ENCODE measurements at regions of chr9 and their contacts with region 1.

Region 1: DNA sequence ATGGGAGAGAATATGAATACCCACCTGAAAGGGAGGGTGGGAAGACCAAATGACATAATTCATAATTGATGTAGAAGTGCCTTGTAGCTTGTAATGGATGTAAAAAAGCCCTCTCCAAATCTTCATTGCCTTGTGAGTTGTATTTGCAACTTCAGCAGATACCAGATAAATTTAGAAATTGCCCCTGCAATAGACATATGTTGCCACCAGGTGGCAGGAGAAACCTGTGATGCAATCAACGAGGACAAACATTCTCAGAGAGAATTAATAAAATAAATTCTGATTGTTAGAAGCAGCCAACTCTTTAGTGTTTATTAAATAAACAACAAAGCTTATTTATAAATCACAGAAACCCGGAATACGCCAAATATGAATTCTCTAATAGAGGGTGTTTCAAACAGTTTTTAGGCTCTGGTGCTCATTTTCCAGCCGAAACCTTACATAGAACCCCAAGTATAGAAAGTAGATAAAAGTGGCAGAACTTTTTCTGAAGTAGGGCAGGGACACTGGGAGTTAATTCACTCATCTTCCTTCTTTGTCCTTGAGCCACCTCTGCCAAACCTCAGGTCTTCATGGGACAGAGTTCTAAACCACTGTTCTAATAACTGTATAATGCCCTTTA is 147.8 kb downstream of the TMEM38B start:
- DNase-seq: no peak
- H3K4me3 ChIP-seq: no peak overlapping the region
- H3K27ac ChIP-seq: no peak overlapping the region
- H3K4me1 ChIP-seq: no peaks in the 10 kb centered on the region
- H3K27me3 ChIP-seq: no peaks in the 10 kb centered on the region
- CTCF ChIP-seq: peak in 3 of 4 experiments; percentile 63 to 71 (median 63)
- EP300 ChIP-seq: no peak
- POLR2A ChIP-seq: no peak

Region 2: DNA sequence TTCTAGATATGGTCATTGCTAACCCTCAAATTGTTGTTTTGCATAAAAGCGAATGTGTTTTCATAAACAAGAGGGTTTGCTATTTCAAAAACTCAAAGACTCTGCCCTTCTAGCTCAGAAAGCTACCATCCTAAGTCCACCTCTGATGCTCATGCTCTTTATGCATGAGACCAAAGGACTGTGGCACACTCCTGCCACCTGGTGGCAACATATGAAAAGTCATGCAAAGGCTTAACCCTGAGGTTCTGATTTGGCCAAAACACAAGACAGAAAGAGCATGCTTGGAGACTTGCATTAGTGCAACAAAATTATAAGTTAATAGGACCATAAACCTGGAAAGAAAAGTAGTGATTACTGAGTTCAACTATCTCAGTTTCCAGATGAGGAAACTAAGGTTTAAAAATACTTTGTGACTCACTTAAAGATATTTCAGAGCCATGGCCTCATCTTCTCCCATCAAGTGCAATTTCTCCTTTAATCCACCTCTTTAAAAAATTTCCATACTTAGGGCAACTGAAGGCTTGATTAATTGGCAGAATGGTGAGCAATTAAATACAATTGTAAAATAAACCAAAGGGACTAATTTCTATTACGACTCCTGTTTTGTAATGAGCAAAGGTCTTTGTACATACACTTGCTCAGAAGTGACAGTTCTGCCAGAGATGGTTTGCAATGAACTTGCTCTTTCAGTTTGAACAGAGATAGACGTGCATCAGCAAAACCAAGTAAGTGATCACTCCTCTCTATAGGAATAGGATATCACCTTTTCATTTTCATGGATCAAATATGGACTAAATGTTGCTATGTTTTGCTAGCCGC is 1330.2 kb after region 1 on chr9:
- intact Hi-C with region 1: loop called (anchors 5 kb)
- DNase-seq: peak; percentile 84
- H3K4me3 ChIP-seq: no peak overlapping the region
- H3K27ac ChIP-seq: no peak overlapping the region
- H3K4me1 ChIP-seq: peaks cover 0 to 25% (median 19%) of the 10 kb centered on the region in 4 donors
- H3K27me3 ChIP-seq: no peaks in the 10 kb centered on the region
- CTCF ChIP-seq: peak; percentile 66 to 91 (median 86)
- EP300 ChIP-seq: no peak
- POLR2A ChIP-seq: no peak